AG04450 (cell line): ENCODE measurements at regions of chr1 and their contacts with region 1.

Region 1: GRCh38 chr1:27057801-27058625 is 45.4 kb upstream of the TENT5B start:
- DNase-seq: no peak
- H3K4me3 ChIP-seq: no peak overlapping the region
- H3K27ac ChIP-seq: no peak overlapping the region
- H3K27me3 ChIP-seq: peaks cover 12% of the 10 kb centered on the region
- CTCF ChIP-seq: no peak

Region 2: DNA sequence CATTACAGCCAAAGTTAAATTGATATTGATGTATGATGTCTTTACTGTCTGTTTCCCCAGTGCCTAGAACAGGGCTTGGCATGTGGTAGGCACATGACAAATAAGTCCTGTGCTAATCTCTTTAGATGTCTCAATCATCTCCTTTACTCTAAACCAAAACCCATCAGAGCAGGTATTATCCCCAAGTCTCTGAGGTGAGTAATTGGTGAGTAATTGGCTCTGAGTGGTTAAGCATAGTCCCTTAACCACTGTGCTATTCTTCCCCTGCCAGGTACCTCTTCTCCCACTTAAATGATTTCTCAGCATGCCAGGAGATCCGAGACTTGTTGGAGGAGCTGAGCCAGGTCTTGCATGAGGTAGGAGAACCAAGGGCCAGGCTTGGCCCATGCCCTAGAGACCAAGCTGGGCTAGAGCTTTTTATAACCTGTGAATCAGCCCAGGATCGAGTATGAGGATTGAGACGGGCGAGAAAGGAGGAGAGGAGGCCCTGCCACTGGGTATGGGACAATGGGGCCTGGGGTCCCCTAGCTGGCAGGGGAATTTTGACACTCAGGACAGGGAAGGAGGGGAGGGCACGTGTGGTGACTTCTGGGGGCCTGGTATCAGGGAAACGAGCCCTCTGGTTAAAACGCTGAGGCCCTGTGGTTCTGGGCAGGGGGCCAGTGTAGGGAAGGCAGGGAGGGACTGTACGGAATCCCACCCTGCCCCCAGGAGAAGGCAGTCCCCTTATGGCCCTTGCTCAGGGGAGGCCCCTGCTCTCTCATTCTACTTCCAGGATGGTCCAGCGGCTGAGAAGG is 876.2 kb before region 1 on chr1:
- CTCF ChIA-PET with region 1: no interaction called
- POLR2A ChIA-PET with region 1: no interaction called
- DNase-seq: no peak
- H3K4me3 ChIP-seq: no peak overlapping the region
- H3K27ac ChIP-seq: no peak overlapping the region
- H3K27me3 ChIP-seq: peaks cover 9% of the 10 kb centered on the region
- CTCF ChIP-seq: no peak

Region 3: GRCh38 chr1:26959722-26960615 is 98.0 kb before region 1 on chr1 and contains the start of gene KDF1:
- CTCF ChIA-PET with region 1: no interaction called
- POLR2A ChIA-PET with region 1: interaction called, 10 read pairs
- DNase-seq: no peak
- H3K4me3 ChIP-seq: peak within 1 kb of the TSS; percentile 35; the same call in 1 of the 2 replicates
- H3K27ac ChIP-seq: no peak within 1 kb of the TSS
- H3K27me3 ChIP-seq: peaks cover 13% of the 10 kb centered on the region
- CTCF ChIP-seq: no peak
- polyA plus RNA-seq, gene KDF1: 0.06 TPM in 1 of 2 replicates, not detected in the other

Region 4: DNA sequence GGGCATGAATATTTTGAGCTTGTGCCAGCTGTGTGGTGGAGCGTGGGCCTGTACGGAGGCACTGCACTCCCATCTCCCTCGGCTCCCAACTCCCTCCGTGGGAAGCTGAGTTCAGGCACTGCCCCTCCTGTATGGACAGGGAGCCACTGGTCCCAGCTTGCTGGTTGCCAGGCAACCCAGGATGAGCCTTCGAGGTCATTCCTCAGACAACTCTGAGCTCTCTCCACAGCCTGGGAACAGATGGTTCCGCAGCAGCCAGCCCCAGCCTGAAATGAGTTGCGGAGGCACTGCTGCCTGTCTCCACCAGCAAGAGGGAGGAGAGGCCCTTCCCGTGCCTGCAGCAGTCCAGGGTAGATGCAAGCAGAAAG is 13.0 kb after region 1 on chr1:
- CTCF ChIA-PET with region 1: no interaction called
- POLR2A ChIA-PET with region 1: no interaction called
- DNase-seq: no peak
- H3K4me3 ChIP-seq: no peak overlapping the region
- H3K27ac ChIP-seq: no peak overlapping the region
- H3K27me3 ChIP-seq: peaks cover 18% of the 10 kb centered on the region
- CTCF ChIP-seq: no peak

Region 5: GRCh38 chr1:27097484-27097917 is 39.5 kb after region 1 on chr1:
- CTCF ChIA-PET with region 1: interaction called, 15 read pairs
- POLR2A ChIA-PET with region 1: no interaction called
- DNase-seq: peak; percentile 44
- H3K4me3 ChIP-seq: no peak overlapping the region
- H3K27ac ChIP-seq: no peak overlapping the region
- H3K27me3 ChIP-seq: no peaks in the 10 kb centered on the region
- CTCF ChIP-seq: peak; percentile 97